Naive thymus-derived CD4-positive, alpha-beta T cell (primary cell): ENCODE measurements at regions of chr1 and their contacts with region 1.

Region 1: GRCh38 chr1:235160957-235161684 is at the start of gene RBM34:
- DNase-seq: peak; percentile 87 to 95 (median 91)
- ATAC-seq: peak; percentile 96
- H3K4me3 ChIP-seq: peak within 1 kb of the TSS; percentile 92
- H3K4me3 Mint-ChIP-seq: peak within 1 kb of the TSS in 8 of 10 donors; percentile 96 to 100 (median 98)
- H3K27ac ChIP-seq: peak within 1 kb of the TSS; percentile 86
- H3K27ac Mint-ChIP-seq: peak within 1 kb of the TSS; percentile 97 to 100 (median 99)
- H3K4me1 ChIP-seq: peaks cover 30 to 33% of the 10 kb centered on the region in 2 donors
- H3K4me1 Mint-ChIP-seq: peaks cover 8 to 30% (median 17%) of the 10 kb centered on the region in 7 donors
- H3K27me3 ChIP-seq: no peaks in the 10 kb centered on the region
- H3K27me3 Mint-ChIP-seq: no peaks in the 10 kb centered on the region
- total RNA-seq, gene RBM34: 105 to 171 (median 137) TPM

Region 2: DNA sequence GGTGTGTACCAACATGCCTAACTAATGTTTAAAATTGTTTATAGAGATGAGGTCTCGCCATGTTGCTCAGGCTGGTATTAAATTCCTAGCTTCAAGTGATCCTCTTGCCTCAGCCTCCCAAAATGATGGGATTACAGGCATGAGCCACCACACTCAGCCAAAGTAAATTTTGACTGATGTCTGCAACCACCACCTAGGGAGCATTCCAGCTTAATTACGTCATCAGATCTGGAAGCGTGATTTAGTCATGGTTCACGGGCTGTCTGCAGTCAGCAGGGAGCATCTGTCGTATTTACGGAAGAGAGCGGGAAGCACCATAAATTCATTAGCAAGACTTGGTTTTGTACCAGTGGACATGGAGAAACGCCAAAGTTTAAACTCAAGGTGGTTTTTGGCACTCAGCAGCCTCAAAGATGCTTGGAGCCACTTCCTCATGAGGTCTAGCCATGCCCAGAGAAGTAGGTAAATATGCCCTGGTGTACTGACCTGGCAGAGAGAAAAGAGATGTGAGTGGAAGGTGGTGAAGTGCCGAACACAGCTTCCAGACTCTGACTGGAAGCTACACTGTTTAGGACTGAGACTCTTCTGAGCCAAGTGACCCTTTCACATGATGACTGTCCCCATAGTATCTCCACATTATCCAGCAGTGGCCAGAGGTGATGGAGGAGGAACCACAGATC is 1317.5 kb before region 1 on chr1:
- CTCF ChIA-PET with region 1: no interaction called
- POLR2A ChIA-PET with region 1: no interaction called
- intact Hi-C with region 1: no loop called
- DNase-seq: no peak
- ATAC-seq: no peak
- H3K4me3 ChIP-seq: no peak overlapping the region
- H3K4me3 Mint-ChIP-seq: no peak overlapping the region
- H3K27ac ChIP-seq: no peak overlapping the region
- H3K27ac Mint-ChIP-seq: no peak overlapping the region
- H3K4me1 ChIP-seq: no peaks in the 10 kb centered on the region
- H3K4me1 Mint-ChIP-seq: no peaks in the 10 kb centered on the region
- H3K27me3 ChIP-seq: no peaks in the 10 kb centered on the region
- H3K27me3 Mint-ChIP-seq: peaks cover 0 to 21% (median 0%) of the 10 kb centered on the region in 5 donors

Region 3: DNA sequence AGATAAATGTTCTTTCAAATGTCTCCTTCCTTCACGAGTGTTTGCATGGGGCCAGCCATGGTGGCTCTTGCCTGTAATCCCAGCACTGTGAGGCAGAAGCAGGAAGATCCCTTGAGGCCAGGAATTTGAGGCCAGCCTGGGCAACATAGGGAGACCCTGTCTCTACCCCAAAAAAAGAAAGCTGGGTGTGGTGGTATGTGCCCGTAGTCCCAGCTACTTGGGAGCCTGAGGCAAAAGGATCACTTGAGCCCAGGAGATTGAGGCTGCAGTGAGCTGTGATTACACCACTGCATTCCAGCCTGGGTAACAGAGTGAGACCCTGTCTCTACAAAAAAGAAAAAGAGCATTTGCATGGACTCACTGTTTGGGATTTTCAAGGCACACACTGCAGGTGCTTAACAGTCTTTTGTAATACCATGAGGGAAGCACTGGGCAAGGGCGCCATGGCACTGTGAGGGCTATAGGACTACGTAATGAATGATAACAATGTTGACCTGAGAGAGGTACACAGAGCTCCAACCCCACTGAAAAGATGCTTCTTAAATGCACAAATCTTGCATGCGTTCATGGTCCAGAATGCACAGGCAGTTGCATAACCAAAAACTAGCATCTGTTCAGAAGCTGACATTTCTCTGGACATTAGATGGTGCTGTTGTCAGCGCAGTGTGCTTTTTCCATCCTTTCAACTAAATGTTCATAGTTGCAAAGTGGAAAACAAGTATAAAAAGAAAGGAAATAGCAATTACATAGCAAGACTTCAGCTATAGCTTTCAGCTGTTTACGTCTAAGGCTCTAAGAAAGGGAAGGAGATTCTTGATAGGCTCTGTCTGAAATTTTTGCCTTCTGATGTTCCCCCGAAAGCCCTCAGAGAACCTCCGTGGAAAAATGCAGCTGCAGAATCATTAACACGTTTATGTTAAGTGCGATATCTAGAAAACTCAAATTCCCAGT is 674.3 kb before region 1 on chr1:
- CTCF ChIA-PET with region 1: no interaction called
- POLR2A ChIA-PET with region 1: no interaction called
- intact Hi-C with region 1: loop called in 1 of 2 experiments (anchors 5 kb)
- DNase-seq: peak in 6 of 9 donors; percentile 17 to 60 (median 44)
- ATAC-seq: peak; percentile 80
- H3K4me3 ChIP-seq: no peak overlapping the region
- H3K4me3 Mint-ChIP-seq: peak overlapping the region in 9 of 10 donors; percentile 10 to 74 (median 57)
- H3K27ac ChIP-seq: no peak overlapping the region
- H3K27ac Mint-ChIP-seq: peak overlapping the region; percentile 18 to 85 (median 79)
- H3K4me1 ChIP-seq: peaks cover 0 to 20% of the 10 kb centered on the region in 2 donors
- H3K4me1 Mint-ChIP-seq: peaks cover 20 to 42% (median 35%) of the 10 kb centered on the region in 7 donors
- H3K27me3 ChIP-seq: no peaks in the 10 kb centered on the region
- H3K27me3 Mint-ChIP-seq: peaks cover 0 to 22% (median 6%) of the 10 kb centered on the region in 5 donors

Region 4: DNA sequence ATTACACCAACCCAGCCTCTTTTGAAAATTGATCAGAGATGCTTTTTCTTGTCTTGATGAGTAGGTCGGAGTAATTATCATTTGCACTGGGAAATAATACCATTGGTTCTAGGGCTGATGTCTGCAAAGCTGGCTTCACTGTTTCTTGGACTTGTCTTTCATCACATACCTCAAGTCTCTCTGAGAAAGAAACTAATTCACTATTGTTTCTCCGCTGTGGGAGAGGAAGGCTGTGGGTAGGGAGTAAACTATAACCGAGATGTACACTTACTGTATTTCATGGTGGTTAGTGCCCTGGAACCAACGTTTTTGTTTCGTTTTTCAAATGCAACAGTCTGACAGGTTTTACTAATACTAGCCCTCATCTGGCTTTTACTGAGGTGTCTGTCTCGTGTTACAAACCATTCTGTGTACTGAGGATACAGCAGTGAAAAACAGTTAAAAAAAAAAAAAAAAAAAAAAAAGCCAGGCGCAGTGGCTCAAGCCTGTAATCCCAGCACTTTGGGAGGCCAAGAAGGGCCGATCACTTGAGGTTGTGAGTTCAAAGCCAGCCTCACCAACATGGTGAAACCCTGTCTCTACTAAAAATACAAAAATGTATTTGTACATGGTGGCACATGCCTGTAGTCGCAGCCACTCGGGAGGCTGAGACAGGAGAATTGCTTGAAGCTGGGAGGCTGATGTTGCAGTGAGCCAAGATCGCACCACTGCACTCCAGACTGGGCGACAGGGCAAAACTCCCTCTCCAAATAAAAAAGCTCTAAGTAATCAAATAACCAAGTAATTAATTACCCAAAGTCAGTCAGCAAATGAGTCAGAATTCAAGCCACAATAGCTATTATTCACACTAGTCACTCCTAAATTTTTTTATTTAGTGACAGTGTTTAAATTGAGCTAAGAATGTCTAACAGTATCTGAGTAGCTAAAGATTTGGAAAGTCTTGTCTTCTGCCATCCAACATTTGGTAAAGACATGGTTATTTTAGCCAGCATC is 55.8 kb before region 1 on chr1:
- CTCF ChIA-PET with region 1: interaction called, 4 read pairs
- POLR2A ChIA-PET with region 1: interaction called, 5 read pairs
- intact Hi-C with region 1: loop called (anchors 1 kb)
- DNase-seq: peak in 1 of 9 donors; percentile 21
- ATAC-seq: peak; percentile 29
- H3K4me3 ChIP-seq: peak overlapping the region; percentile 55
- H3K4me3 Mint-ChIP-seq: peak overlapping the region in 9 of 10 donors; percentile 15 to 85 (median 77)
- H3K27ac ChIP-seq: no peak overlapping the region
- H3K27ac Mint-ChIP-seq: peak overlapping the region in 2 of 9 donors; percentile 54 to 76
- H3K4me1 ChIP-seq: peaks cover 21 to 23% of the 10 kb centered on the region in 2 donors
- H3K4me1 Mint-ChIP-seq: peaks cover 20 to 47% (median 41%) of the 10 kb centered on the region in 7 donors
- H3K27me3 ChIP-seq: no peaks in the 10 kb centered on the region
- H3K27me3 Mint-ChIP-seq: peaks cover 0 to 5% (median 0%) of the 10 kb centered on the region in 5 donors

Region 5: DNA sequence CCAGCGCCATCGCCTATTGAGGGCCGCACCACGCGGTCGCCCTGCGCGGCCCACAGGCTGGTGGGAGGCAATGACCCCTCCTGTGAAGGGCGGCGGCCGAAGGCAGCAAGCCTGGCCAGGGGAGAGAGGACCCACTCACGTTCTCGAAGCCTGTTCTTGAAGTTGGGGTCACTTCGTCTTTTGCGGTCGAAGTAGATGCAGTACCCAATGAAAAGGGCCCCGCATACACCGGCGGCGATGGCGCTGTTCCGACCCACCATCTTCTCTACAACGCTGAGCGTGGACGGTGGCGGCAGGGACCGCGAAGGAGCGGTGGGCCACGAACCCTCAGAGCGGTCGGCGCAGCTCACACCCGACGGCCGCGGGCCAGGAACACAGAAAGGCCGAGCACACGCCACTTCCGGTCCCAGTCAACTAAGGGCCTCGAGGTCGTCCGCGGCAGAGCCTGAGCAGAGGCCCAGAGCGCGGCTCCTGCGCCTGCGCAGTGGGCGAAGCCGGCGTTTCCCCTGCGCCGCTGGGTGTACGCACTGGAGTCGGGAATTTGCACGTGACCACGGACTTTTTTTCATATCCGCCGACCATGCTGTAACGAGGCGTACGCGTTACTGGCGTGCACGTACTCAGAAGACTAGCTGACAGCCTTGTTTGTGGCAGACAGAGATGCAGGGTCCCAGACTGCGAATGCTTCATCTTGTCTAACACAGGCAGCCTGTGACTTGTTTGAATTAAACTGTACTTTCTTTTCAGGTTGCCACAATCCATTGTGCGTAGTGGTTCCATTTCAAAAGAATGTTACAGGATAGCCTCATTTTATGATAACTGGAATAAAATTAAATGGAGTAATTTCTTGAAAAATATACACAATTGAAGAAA is 32.4 kb before region 1 on chr1 and contains the start of gene TOMM20:
- CTCF ChIA-PET with region 1: interaction called, 4 read pairs
- POLR2A ChIA-PET with region 1: interaction called, 54 read pairs
- intact Hi-C with region 1: loop called (anchors 1 kb)
- DNase-seq: peak; percentile 91 to 97 (median 95)
- ATAC-seq: peak; percentile 97
- H3K4me3 ChIP-seq: peak within 1 kb of the TSS; percentile 98
- H3K4me3 Mint-ChIP-seq: peak within 1 kb of the TSS; percentile 88 to 99 (median 96)
- H3K27ac ChIP-seq: peak within 1 kb of the TSS; percentile 94
- H3K27ac Mint-ChIP-seq: peak within 1 kb of the TSS; percentile 93 to 99 (median 98)
- H3K4me1 ChIP-seq: peaks cover 22 to 24% of the 10 kb centered on the region in 2 donors
- H3K4me1 Mint-ChIP-seq: peaks cover 17 to 55% (median 42%) of the 10 kb centered on the region in 7 donors
- H3K27me3 ChIP-seq: no peaks in the 10 kb centered on the region
- H3K27me3 Mint-ChIP-seq: no peaks in the 10 kb centered on the region
- total RNA-seq, gene TOMM20: 88.0 to 124 (median 100) TPM

Region 6: DNA sequence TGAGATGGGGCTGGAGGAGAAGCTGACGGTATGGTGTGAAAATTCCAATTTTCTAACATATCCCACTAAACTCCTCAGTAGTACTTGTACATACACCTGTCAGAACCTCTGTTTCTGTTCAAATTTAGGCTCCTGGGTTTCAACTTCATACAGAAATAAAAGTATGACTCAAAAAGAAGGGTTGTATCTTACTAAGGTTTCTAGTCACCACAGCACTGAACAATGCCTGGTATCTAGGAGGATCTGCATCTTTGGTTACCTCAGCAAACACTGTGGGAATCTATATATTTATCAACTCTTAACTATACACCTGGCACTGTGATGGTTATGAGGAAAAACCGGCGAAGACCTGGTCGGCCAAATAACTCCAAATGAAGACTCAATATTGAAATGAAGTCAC is 13.9 kb before region 1 on chr1:
- CTCF ChIA-PET with region 1: no interaction called
- POLR2A ChIA-PET with region 1: interaction called, 23 read pairs
- intact Hi-C with region 1: no loop called
- DNase-seq: no peak
- ATAC-seq: no peak
- H3K4me3 ChIP-seq: no peak overlapping the region
- H3K4me3 Mint-ChIP-seq: no peak overlapping the region
- H3K27ac ChIP-seq: no peak overlapping the region
- H3K27ac Mint-ChIP-seq: peak overlapping the region in 2 of 9 donors; percentile 8 to 34
- H3K4me1 ChIP-seq: no peaks in the 10 kb centered on the region
- H3K4me1 Mint-ChIP-seq: peaks cover 14 to 35% (median 25%) of the 10 kb centered on the region in 7 donors
- H3K27me3 ChIP-seq: no peaks in the 10 kb centered on the region
- H3K27me3 Mint-ChIP-seq: no peaks in the 10 kb centered on the region

Region 7: GRCh38 chr1:235206533-235207208 is 45.5 kb after region 1 on chr1:
- CTCF ChIA-PET with region 1: no interaction called
- POLR2A ChIA-PET with region 1: interaction called, 16 read pairs
- intact Hi-C with region 1: loop called in 1 of 2 experiments (anchors 1 kb)
- DNase-seq: peak in 1 of 9 donors; percentile 47
- ATAC-seq: peak; percentile 79
- H3K4me3 ChIP-seq: no peak overlapping the region
- H3K4me3 Mint-ChIP-seq: peak overlapping the region; percentile 8 to 77 (median 60)
- H3K27ac ChIP-seq: peak overlapping the region; percentile 36
- H3K27ac Mint-ChIP-seq: peak overlapping the region; percentile 58 to 89 (median 85)
- H3K4me1 ChIP-seq: peaks cover 0 to 18% of the 10 kb centered on the region in 2 donors
- H3K4me1 Mint-ChIP-seq: peaks cover 18 to 42% (median 32%) of the 10 kb centered on the region in 7 donors
- H3K27me3 ChIP-seq: no peaks in the 10 kb centered on the region
- H3K27me3 Mint-ChIP-seq: no peaks in the 10 kb centered on the region

Region 8: DNA sequence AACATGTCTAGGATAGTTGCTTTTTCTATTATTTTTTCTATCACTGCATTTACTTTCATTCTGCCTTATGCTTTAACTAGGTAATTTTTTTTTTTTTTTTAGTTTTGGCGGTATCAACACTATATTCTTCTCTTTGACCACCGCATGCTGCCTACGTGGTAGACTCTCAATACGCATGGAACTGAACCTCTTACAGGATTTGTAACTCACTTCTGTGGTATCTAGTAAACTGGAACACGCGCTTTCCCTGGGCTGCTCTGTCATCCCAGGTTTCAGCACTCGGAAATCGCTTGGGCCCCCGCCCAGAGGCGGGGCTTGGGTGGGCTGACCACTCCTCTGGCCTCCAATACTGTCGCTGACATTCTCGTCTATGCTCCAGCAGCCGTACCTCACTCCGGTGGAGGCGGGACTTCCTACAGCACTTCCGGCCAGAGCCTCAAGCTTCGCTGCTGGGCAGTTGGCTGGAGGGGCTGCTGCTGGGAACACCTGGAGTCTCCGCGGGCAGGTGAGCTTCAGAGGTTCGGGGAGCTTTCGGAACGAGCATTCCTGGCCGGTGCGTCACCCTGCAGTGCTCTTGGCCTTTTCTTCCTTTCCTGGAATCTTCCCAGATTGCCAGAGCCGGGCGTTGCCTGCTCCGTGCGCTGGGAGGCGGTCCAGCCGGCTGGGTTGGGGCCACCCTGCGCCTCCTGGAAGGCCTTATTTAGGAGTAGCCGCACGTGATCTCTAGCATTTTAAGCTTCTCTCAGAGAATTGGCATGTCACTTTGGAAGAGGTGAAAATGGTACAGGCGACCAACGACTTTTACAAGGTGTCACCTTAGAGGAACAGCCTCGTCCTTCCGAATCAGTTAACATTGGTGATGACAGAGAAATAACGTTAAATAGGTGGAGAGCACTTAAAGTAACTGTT is 206.1 kb after region 1 on chr1 and contains the start of gene TBCE:
- CTCF ChIA-PET with region 1: no interaction called
- POLR2A ChIA-PET with region 1: interaction called, 4 read pairs
- intact Hi-C with region 1: loop called in 1 of 2 experiments (anchors 2 kb)
- DNase-seq: peak; percentile 61 to 89 (median 63)
- ATAC-seq: peak; percentile 99
- H3K4me3 ChIP-seq: peak within 1 kb of the TSS; percentile 90
- H3K4me3 Mint-ChIP-seq: peak within 1 kb of the TSS; percentile 91 to 99 (median 98)
- H3K27ac ChIP-seq: peak within 1 kb of the TSS; percentile 74
- H3K27ac Mint-ChIP-seq: peak within 1 kb of the TSS; percentile 86 to 97 (median 93)
- H3K4me1 ChIP-seq: peaks cover 0 to 11% of the 10 kb centered on the region in 2 donors
- H3K4me1 Mint-ChIP-seq: peaks cover 13 to 41% (median 38%) of the 10 kb centered on the region in 7 donors
- H3K27me3 ChIP-seq: no peaks in the 10 kb centered on the region
- H3K27me3 Mint-ChIP-seq: no peaks in the 10 kb centered on the region
- total RNA-seq, gene TBCE: 16.8 to 26.1 (median 20.6) TPM